Ovary (tissue), 10 donors: ENCODE measurements at regions of chr12 and their contacts with region 1.

Region 1: GRCh38 chr12:21697904-21698630 is 40.4 kb upstream of the LDHB start:
- DNase-seq: no peak
- H3K4me3 ChIP-seq: no peak overlapping the region
- H3K27ac ChIP-seq: no peak overlapping the region
- H3K4me1 ChIP-seq: no peaks in the 10 kb centered on the region
- H3K27me3 ChIP-seq: no peaks in the 10 kb centered on the region
- CTCF ChIP-seq: peak; percentile 16 to 52 (median 49)
- EP300 ChIP-seq: no peak
- POLR2A ChIP-seq: no peak

Region 2: DNA sequence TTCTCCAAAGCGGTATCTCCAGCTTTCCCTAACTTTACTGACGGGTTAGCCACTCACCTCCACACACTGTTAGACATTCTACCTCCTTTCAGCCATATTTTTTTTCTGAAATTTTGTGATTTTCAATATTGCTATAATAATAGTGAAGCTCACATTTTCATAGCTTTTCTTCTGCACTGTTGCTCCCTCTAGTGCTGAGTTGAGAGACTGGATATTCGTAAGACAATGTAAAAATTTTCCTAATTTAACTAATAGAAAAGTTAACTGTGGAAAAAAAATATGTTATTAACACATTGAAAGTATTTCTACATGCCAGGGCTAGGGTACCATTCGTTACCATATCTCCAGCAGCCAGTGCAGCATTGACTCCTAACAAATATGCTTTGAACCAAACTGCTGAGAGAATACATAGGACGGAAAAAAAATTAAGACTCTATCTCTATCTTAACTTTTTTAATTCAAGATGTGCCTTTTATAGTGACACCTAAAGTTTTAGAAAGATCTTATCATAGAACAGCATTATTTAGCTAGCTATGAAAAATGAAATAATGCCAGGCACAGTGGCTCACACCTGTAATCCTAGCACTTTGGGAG is 291.8 kb after region 1 on chr12:
- intact Hi-C with region 1: loop called (anchors 5 to 10 kb)
- DNase-seq: no peak
- H3K4me3 ChIP-seq: no peak overlapping the region
- H3K27ac ChIP-seq: no peak overlapping the region
- H3K4me1 ChIP-seq: no peaks in the 10 kb centered on the region
- H3K27me3 ChIP-seq: no peaks in the 10 kb centered on the region
- CTCF ChIP-seq: peak in 2 of 3 donors; percentile 64 to 65
- EP300 ChIP-seq: no peak
- POLR2A ChIP-seq: no peak

Region 3: GRCh38 chr12:21998782-21999181 is 300.7 kb after region 1 on chr12:
- intact Hi-C with region 1: loop called (anchors 5 to 10 kb)
- DNase-seq: no peak
- H3K4me3 ChIP-seq: no peak overlapping the region
- H3K27ac ChIP-seq: no peak overlapping the region
- H3K4me1 ChIP-seq: no peaks in the 10 kb centered on the region
- H3K27me3 ChIP-seq: no peaks in the 10 kb centered on the region
- CTCF ChIP-seq: no peak
- EP300 ChIP-seq: no peak
- POLR2A ChIP-seq: no peak